ENCODE measurements at regions of chr22 and their contacts with region 1.

Region 1: GRCh38 chr22:24423519-24424000 is 3.8 kb upstream of the ADORA2A start:
- DNase-seq: peak; percentile 74
- H3K4me3 ChIP-seq: peak overlapping the region; percentile 74
- H3K27ac ChIP-seq: no peak overlapping the region
- H3K4me1 ChIP-seq: peaks cover 40% of the 10 kb centered on the region
- CTCF ChIP-seq: peak; percentile 78

Region 2: GRCh38 chr22:24325105-24325757 is 98.3 kb before region 1 on chr22:
- CTCF ChIA-PET with region 1: no interaction called
- POLR2A ChIA-PET with region 1: no interaction called
- intact Hi-C with region 1: loop called (anchors 5 kb)
- DNase-seq: peak; percentile 79
- H3K4me3 ChIP-seq: no peak overlapping the region
- H3K27ac ChIP-seq: no peak overlapping the region
- H3K4me1 ChIP-seq: peaks cover 10% of the 10 kb centered on the region
- CTCF ChIP-seq: peak; percentile 92

Region 3: GRCh38 chr22:24433813-24434470 is 10.4 kb after region 1 on chr22:
- CTCF ChIA-PET with region 1: interaction called, 3 read pairs
- POLR2A ChIA-PET with region 1: interaction called, 12 read pairs
- intact Hi-C with region 1: loop called (anchors 1 kb)
- DNase-seq: peak; percentile 92
- H3K4me3 ChIP-seq: peak overlapping the region; percentile 61
- H3K27ac ChIP-seq: peak overlapping the region; percentile 99
- H3K4me1 ChIP-seq: peaks cover 98% of the 10 kb centered on the region
- CTCF ChIP-seq: no peak

Region 4: GRCh38 chr22:24482575-24482974 is 59.0 kb after region 1 on chr22:
- CTCF ChIA-PET with region 1: no interaction called
- POLR2A ChIA-PET with region 1: interaction called, 3 read pairs
- intact Hi-C with region 1: loop called (anchors 1 kb)
- DNase-seq: no peak
- H3K4me3 ChIP-seq: no peak overlapping the region
- H3K27ac ChIP-seq: no peak overlapping the region
- H3K4me1 ChIP-seq: peaks cover 6% of the 10 kb centered on the region
- CTCF ChIP-seq: no peak

Region 5: GRCh38 chr22:24503137-24503842 is 79.7 kb after region 1 on chr22:
- CTCF ChIA-PET with region 1: interaction called, 5 read pairs
- POLR2A ChIA-PET with region 1: interaction called, 6 read pairs
- intact Hi-C with region 1: loop called (anchors 1 kb)
- DNase-seq: peak; percentile 80
- H3K4me3 ChIP-seq: no peak overlapping the region
- H3K27ac ChIP-seq: no peak overlapping the region
- H3K4me1 ChIP-seq: peaks cover 32% of the 10 kb centered on the region
- CTCF ChIP-seq: peak; percentile 91

Region 6: DNA sequence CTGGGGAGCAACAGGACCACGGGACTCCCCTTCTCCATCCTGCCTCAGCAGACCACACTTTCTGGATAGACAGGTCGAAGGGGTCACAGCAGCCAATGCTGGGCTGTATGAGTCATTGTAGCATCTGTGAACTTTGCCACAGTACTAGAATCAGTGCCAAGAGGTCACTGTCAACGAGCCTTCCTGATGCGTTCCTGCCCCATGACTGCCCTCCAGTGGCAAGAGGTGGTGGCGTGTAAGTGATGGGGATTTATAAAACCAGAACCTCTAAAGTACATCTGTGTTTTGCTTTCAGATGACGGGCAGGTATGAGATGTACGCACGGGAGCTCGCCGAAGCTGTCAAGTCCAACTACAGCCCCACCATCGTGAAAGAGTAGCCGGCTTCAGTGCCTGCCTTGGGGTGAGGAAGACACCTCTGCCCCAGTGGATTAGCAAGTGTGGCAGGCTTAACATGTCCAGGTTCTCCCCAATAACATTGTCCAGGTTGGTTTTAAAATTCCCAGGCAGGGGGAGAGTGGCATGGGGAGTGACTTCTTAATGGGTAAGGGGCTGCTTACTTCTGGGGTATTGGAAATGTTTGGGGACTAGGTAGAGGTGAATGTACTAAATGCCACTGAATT is 102.0 kb after region 1 on chr22:
- CTCF ChIA-PET with region 1: interaction called, 4 read pairs
- POLR2A ChIA-PET with region 1: no interaction called
- intact Hi-C with region 1: loop called (anchors 1 kb)
- DNase-seq: peak; percentile 88
- H3K4me3 ChIP-seq: no peak overlapping the region
- H3K27ac ChIP-seq: no peak overlapping the region
- H3K4me1 ChIP-seq: peaks cover 22% of the 10 kb centered on the region
- CTCF ChIP-seq: peak; percentile 96

Region 7: DNA sequence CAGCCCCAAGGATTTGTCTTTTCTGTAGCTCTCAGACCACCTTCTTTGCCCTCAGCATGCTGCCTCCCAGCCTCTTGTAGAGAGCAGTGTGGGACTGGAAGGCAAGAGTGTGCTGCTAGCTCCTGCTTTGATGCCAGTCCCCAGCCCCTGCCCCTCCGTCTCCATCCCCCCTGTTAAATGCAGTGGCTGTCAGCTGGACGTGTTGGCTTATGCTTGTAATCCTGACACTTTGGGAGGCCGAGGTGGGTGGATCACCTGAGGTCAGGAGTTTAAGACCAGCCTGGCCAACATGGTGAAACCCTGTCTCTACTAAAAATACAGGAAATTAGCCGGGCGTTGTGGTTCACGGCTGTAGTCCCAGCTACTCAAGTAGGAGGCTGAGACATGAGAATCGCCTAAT is 147.7 kb after region 1 on chr22:
- CTCF ChIA-PET with region 1: no interaction called
- POLR2A ChIA-PET with region 1: no interaction called
- intact Hi-C with region 1: no loop called
- DNase-seq: no peak
- H3K4me3 ChIP-seq: no peak overlapping the region
- H3K27ac ChIP-seq: no peak overlapping the region
- H3K4me1 ChIP-seq: no peaks in the 10 kb centered on the region
- CTCF ChIP-seq: no peak

Region 8: DNA sequence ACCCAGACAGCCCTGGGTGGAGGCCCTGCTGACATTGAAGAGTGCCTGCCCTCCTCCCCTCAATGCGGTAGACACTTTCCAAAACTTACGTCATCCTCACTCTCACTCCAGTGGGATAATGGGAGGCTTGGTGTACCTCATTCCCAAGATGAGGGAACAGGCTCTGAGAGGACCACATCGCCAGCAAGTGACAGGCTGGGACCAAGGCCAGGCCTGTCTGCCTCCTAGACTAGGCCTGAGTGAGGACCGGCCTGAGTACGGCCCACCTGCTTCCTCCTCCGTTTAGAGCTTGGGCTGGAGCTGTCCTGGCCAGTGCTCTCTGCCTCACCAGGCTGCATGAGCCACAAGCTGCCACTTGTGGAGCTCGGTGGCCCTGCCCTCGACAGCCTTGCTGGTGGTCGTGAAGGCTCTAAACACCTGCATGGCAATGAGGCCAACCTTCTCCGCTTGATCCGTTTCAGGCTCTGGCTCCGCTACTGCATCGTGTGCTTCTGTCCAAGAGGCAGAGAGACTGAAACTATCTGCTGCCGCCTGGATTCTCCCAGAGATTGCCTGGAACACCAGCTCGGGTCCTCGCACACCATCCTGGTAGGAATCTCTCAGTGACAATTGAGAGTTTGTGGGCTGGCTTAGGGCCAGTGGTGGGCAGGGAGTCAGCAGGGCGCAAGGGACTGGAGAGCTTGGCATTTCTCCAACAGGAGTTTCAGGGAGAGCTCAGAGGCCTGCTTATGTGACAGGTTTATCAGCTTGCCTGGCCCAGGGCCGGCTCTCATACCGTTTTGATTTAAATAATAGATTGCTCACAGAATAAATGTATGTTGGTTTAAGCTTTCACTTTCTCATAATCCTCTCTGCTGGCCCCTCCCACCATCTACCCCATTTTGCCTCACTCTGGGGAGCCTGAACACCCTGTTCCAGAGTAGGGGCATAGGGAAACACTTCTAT is 159.9 kb after region 1 on chr22:
- CTCF ChIA-PET with region 1: no interaction called
- POLR2A ChIA-PET with region 1: no interaction called
- intact Hi-C with region 1: no loop called
- DNase-seq: no peak
- H3K4me3 ChIP-seq: no peak overlapping the region
- H3K27ac ChIP-seq: no peak overlapping the region
- H3K4me1 ChIP-seq: no peaks in the 10 kb centered on the region
- CTCF ChIP-seq: no peak

Measured in OCI-LY7 (cell line).